OCI-LY7 (cell line): ENCODE measurements at regions of chr5 and their contacts with region 1.

Region 1: GRCh38 chr5:107513337-107514085 is 157.2 kb downstream of the EFNA5 start:
- DNase-seq: peak; percentile 95
- H3K4me3 ChIP-seq: peak overlapping the region; percentile 56
- H3K27ac ChIP-seq: peak overlapping the region; percentile 99
- H3K4me1 ChIP-seq: peaks cover 91% of the 10 kb centered on the region
- CTCF ChIP-seq: no peak; the same call in 1 of the 2 replicates

Region 2: DNA sequence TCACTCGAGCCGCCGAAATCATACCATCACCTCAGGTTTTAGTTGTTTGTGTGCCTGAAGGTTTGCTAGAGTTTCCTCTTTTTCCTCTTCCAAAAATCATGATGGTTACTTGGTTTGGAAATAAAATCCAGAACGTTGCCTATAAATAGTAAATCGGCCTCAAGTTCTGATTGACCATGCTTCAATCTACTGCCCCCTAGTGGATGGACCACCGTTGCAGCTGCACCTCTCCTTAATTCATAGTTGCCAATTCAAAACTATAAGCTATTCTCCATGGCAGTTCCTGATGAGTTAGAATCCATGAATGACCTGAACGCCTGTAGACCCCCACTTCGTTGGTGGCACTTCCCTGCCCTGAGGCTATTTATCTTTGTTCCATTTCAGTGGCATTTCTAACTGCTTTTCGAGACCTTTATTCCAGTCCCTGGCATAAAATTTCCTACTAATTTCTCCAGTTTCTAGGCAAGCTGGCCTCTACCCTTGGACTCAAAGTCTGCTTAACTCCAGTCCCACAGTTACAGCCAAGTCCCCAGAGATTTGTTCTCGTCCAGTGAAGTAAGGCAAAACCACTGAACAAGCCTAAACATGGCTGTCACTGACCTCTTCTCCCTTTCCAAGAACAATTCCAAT is 265.3 kb before region 1 on chr5:
- CTCF ChIA-PET with region 1: no interaction called
- POLR2A ChIA-PET with region 1: no interaction called
- intact Hi-C with region 1: loop called (anchors 5 kb)
- DNase-seq: peak; percentile 62
- H3K4me3 ChIP-seq: no peak overlapping the region
- H3K27ac ChIP-seq: no peak overlapping the region
- H3K4me1 ChIP-seq: peaks cover 8% of the 10 kb centered on the region
- CTCF ChIP-seq: peak; percentile 99

Region 3: GRCh38 chr5:107373549-107374263 is 139.8 kb before region 1 on chr5:
- CTCF ChIA-PET with region 1: no interaction called
- POLR2A ChIA-PET with region 1: interaction called, 10 read pairs
- intact Hi-C with region 1: loop called (anchors 5 kb)
- DNase-seq: peak; percentile 81
- H3K4me3 ChIP-seq: peak overlapping the region; percentile 51
- H3K27ac ChIP-seq: peak overlapping the region; percentile 69
- H3K4me1 ChIP-seq: peaks cover 63% of the 10 kb centered on the region
- CTCF ChIP-seq: no peak

Region 4: DNA sequence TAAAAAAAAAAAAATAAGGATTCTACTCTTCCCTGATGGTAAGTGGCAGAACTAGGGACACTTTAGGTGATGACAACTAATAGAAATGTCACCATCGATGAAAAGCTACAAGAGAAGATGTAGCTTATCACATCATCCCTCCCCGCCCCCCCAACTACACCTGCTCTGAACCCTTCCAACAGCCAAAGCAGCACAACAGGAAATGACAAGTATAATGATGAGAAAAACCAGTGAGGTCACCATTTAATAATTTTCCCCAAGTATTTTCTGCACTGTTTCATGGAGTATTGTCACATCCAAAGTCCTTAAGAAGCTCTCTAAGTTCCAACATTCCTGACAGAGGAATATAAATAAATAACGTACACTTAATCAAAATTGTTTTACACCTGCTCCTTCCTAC is 64.1 kb before region 1 on chr5:
- CTCF ChIA-PET with region 1: no interaction called
- POLR2A ChIA-PET with region 1: interaction called, 12 read pairs
- intact Hi-C with region 1: loop called (anchors 5 kb)
- DNase-seq: peak; percentile 65
- H3K4me3 ChIP-seq: peak overlapping the region; percentile 35
- H3K27ac ChIP-seq: peak overlapping the region; percentile 63
- H3K4me1 ChIP-seq: peaks cover 48% of the 10 kb centered on the region
- CTCF ChIP-seq: no peak

Region 5: GRCh38 chr5:107476783-107477182 is 36.7 kb before region 1 on chr5:
- CTCF ChIA-PET with region 1: interaction called, 3 read pairs
- POLR2A ChIA-PET with region 1: interaction called, 12 read pairs
- intact Hi-C with region 1: no loop called
- DNase-seq: peak; percentile 71
- H3K4me3 ChIP-seq: no peak overlapping the region
- H3K27ac ChIP-seq: peak overlapping the region; percentile 15
- H3K4me1 ChIP-seq: peaks cover 39% of the 10 kb centered on the region
- CTCF ChIP-seq: no peak

Region 6: DNA sequence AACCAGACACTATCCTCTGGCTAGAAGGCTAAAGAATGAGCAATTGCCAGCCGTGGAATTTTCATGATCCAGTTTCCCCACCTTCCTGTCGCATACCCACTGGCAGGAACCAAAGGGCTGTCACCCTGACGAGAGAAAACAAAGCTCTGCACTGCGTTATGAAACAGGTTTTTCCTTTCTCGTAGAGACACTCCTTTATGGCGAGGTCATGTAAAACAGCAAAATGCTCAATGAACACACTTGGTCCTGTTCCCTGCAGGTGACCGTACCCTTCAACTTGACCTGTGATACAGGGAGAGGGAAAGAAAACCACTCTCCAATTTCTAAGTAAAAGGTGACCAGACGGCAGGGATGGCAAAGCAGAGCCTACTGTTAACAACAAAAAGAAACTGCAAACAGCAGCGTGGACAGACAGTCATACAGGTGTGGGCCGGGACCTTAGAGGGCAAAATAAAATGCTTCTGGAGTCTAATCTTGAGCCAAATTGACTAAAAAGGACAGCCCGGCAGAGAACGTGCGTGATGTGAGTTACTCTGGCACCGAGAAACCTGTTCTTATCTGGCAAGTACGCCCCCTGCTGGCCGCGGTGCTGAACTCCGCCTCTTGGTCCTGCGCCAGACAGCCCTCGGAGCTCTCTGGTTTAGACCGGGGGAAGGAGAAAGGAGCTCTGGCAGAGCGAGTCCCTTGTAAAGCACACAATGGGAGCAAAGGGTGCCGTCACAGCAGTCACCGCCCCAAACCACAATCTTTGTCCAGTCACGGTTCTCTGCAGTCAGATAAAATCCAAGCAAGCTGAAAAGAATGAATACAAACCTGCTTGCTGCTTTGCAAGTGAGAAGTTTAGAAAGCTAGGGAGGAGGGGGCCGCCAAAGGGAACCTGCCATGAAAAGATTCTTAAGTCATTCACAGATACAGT is 58.4 kb after region 1 on chr5:
- CTCF ChIA-PET with region 1: interaction called, 33 read pairs
- POLR2A ChIA-PET with region 1: interaction called, 154 read pairs
- intact Hi-C with region 1: loop called (anchors 1 kb)
- DNase-seq: peak; percentile 94
- H3K4me3 ChIP-seq: peak overlapping the region; percentile 60
- H3K27ac ChIP-seq: peak overlapping the region; percentile 96
- H3K4me1 ChIP-seq: peaks cover 63% of the 10 kb centered on the region
- CTCF ChIP-seq: peak; percentile 96